ENCODE measurements at regions of chr5 and their contacts with region 1.

Region 1: DNA sequence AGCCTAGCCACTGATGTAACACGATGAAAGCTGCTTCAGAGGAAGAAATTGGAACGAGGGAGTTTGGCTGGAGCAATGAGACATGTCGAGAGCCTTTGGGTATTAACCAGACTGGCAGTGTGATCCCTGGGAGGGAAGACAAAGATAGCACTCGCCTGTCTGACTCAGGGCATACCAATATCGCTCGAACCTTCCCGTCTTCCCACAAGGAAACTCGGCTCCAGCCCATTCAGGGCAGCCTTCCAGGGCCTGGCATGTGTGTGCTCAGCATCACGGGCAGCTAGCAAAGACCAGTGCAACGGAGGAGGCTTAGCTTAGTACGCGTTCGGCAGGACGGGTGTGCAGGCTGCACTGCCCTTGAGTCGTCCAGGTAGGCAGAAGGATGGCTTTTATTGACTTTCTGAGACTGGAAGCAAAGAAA is 356.9 kb upstream of the WWC1 start:
- DNase-seq: peak; percentile 89

Region 2: GRCh38 chr5:167945542-167946384 is 11.2 kb after region 1 on chr5:
- intact Hi-C with region 1: loop called (anchors 1 kb)
- DNase-seq: no peak

Measured in cardiac septum (tissue), 1 donor.